CD4-positive, alpha-beta T cell (primary cell): ENCODE measurements at regions of chr19 and their contacts with region 1.

Region 1: DNA sequence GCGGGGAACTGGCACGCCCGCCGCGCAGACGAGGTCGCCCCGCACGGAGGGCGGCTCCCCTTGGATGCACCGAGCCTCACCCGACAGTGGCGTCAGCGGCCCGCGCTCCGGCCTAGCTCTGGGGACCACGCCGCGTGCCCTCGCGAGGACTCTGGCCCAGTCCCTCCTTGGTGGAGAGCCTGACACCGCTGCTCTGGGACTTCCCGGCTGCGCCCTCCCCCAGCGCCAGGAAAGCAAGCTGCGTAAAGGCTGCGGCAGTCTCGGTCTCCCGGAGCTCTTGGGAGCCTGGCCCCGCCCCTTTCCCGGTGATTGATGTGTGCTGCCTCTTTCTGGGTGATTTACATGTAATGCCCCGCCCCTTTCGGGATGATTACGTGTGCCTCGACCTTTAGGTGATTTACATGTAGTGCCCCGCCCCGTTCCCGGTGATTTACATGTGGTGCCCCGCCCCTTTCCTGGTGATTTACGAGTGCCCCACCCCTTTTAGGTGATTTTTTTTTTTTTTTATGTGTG is at the start of gene LENG9:
- DNase-seq: peak; percentile 77 to 99 (median 88)
- ATAC-seq: peak; percentile 71
- H3K4me3 ChIP-seq: peak within 1 kb of the TSS; percentile 82
- H3K4me3 Mint-ChIP-seq: peak within 1 kb of the TSS; percentile 86
- H3K27ac ChIP-seq: peak within 1 kb of the TSS; percentile 69
- H3K27ac Mint-ChIP-seq: peak within 1 kb of the TSS; percentile 84
- H3K4me1 ChIP-seq: peaks cover 49% of the 10 kb centered on the region
- H3K4me1 Mint-ChIP-seq: peaks cover 36% of the 10 kb centered on the region
- H3K27me3 ChIP-seq: no peaks in the 10 kb centered on the region
- H3K27me3 Mint-ChIP-seq: peaks cover 10% of the 10 kb centered on the region
- CTCF ChIP-seq: no peak
- total RNA-seq, gene LENG9: 2.8 to 2.9 TPM

Region 2: GRCh38 chr19:53867225-53868090 is 596.1 kb before region 1 on chr19 and contains the start of gene MYADM:
- CTCF ChIA-PET with region 1: no interaction called
- POLR2A ChIA-PET with region 1: no interaction called
- intact Hi-C with region 1: loop called (anchors 10 kb)
- DNase-seq: peak; percentile 99 to 100 (median 100)
- ATAC-seq: peak; percentile 75
- H3K4me3 ChIP-seq: peak within 1 kb of the TSS; percentile 100
- H3K4me3 Mint-ChIP-seq: peak within 1 kb of the TSS; percentile 99
- H3K27ac ChIP-seq: peak within 1 kb of the TSS; percentile 97 to 100
- H3K27ac Mint-ChIP-seq: peak within 1 kb of the TSS; percentile 99
- H3K4me1 ChIP-seq: peaks cover 59% of the 10 kb centered on the region
- H3K4me1 Mint-ChIP-seq: peaks cover 46% of the 10 kb centered on the region
- H3K27me3 ChIP-seq: no peaks in the 10 kb centered on the region
- H3K27me3 Mint-ChIP-seq: no peaks in the 10 kb centered on the region
- CTCF ChIP-seq: no peak
- total RNA-seq, gene MYADM: 444 to 448 TPM

Region 3: GRCh38 chr19:54209811-54210494 is 253.6 kb before region 1 on chr19:
- CTCF ChIA-PET with region 1: no interaction called
- POLR2A ChIA-PET with region 1: no interaction called
- intact Hi-C with region 1: loop called in 1 of 2 experiments (anchors 10 kb)
- DNase-seq: peak in 4 of 14 experiments; percentile 28 to 69 (median 56)
- ATAC-seq: no peak
- H3K4me3 ChIP-seq: no peak overlapping the region
- H3K4me3 Mint-ChIP-seq: peak overlapping the region; percentile 18
- H3K27ac ChIP-seq: peak overlapping the region; percentile 4 to 23
- H3K27ac Mint-ChIP-seq: peak overlapping the region; percentile 62
- H3K4me1 ChIP-seq: peaks cover 65% of the 10 kb centered on the region
- H3K4me1 Mint-ChIP-seq: peaks cover 56% of the 10 kb centered on the region
- H3K27me3 ChIP-seq: no peaks in the 10 kb centered on the region
- H3K27me3 Mint-ChIP-seq: no peaks in the 10 kb centered on the region
- CTCF ChIP-seq: no peak

Region 4: GRCh38 chr19:54297760-54298305 is 165.8 kb before region 1 on chr19:
- CTCF ChIA-PET with region 1: no interaction called
- POLR2A ChIA-PET with region 1: no interaction called
- intact Hi-C with region 1: no loop called
- DNase-seq: no peak
- ATAC-seq: no peak
- H3K4me3 ChIP-seq: no peak overlapping the region
- H3K4me3 Mint-ChIP-seq: no peak overlapping the region
- H3K27ac ChIP-seq: no peak overlapping the region
- H3K27ac Mint-ChIP-seq: no peak overlapping the region
- H3K4me1 ChIP-seq: no peaks in the 10 kb centered on the region
- H3K4me1 Mint-ChIP-seq: peaks cover 8% of the 10 kb centered on the region
- H3K27me3 ChIP-seq: peaks cover 9 to 14% of the 10 kb centered on the region in 2 experiments
- H3K27me3 Mint-ChIP-seq: peaks cover 16% of the 10 kb centered on the region
- CTCF ChIP-seq: no peak

Region 5: GRCh38 chr19:54448774-54449700 is 14.6 kb before region 1 on chr19 and contains the start of gene LENG8:
- CTCF ChIA-PET with region 1: interaction called, 3 read pairs
- POLR2A ChIA-PET with region 1: interaction called, 72 read pairs
- intact Hi-C with region 1: loop called (anchors 1 kb)
- DNase-seq: peak; percentile 93 to 100 (median 97)
- ATAC-seq: peak; percentile 90
- H3K4me3 ChIP-seq: peak within 1 kb of the TSS; percentile 98
- H3K4me3 Mint-ChIP-seq: peak within 1 kb of the TSS; percentile 92
- H3K27ac ChIP-seq: peak within 1 kb of the TSS; percentile 91 to 98
- H3K27ac Mint-ChIP-seq: peak within 1 kb of the TSS; percentile 98
- H3K4me1 ChIP-seq: peaks cover 48% of the 10 kb centered on the region
- H3K4me1 Mint-ChIP-seq: peaks cover 56% of the 10 kb centered on the region
- H3K27me3 ChIP-seq: no peaks in the 10 kb centered on the region
- H3K27me3 Mint-ChIP-seq: no peaks in the 10 kb centered on the region
- CTCF ChIP-seq: no peak
- total RNA-seq, gene LENG8: 610 to 639 TPM

Region 6: GRCh38 chr19:54481322-54481930 is 17.8 kb after region 1 on chr19:
- CTCF ChIA-PET with region 1: no interaction called
- POLR2A ChIA-PET with region 1: no interaction called
- intact Hi-C with region 1: no loop called
- DNase-seq: peak in 6 of 14 experiments; percentile 22 to 77 (median 44)
- ATAC-seq: peak; percentile 63
- H3K4me3 ChIP-seq: no peak overlapping the region
- H3K4me3 Mint-ChIP-seq: no peak overlapping the region
- H3K27ac ChIP-seq: no peak overlapping the region
- H3K27ac Mint-ChIP-seq: no peak overlapping the region
- H3K4me1 ChIP-seq: peaks cover 5% of the 10 kb centered on the region
- H3K4me1 Mint-ChIP-seq: peaks cover 5% of the 10 kb centered on the region
- H3K27me3 ChIP-seq: peaks cover 3 to 8% of the 10 kb centered on the region in 2 experiments
- H3K27me3 Mint-ChIP-seq: peaks cover 47% of the 10 kb centered on the region
- CTCF ChIP-seq: peak; percentile 79

Region 7: GRCh38 chr19:54594737-54595136 is 131.2 kb after region 1 on chr19:
- CTCF ChIA-PET with region 1: no interaction called
- POLR2A ChIA-PET with region 1: no interaction called
- intact Hi-C with region 1: no loop called
- DNase-seq: no peak
- ATAC-seq: no peak
- H3K4me3 ChIP-seq: no peak overlapping the region
- H3K4me3 Mint-ChIP-seq: no peak overlapping the region
- H3K27ac ChIP-seq: no peak overlapping the region
- H3K27ac Mint-ChIP-seq: no peak overlapping the region
- H3K4me1 ChIP-seq: no peaks in the 10 kb centered on the region
- H3K4me1 Mint-ChIP-seq: no peaks in the 10 kb centered on the region
- H3K27me3 ChIP-seq: peaks cover 8 to 16% of the 10 kb centered on the region in 2 experiments
- H3K27me3 Mint-ChIP-seq: peaks cover 36% of the 10 kb centered on the region
- CTCF ChIP-seq: no peak

Region 8: DNA sequence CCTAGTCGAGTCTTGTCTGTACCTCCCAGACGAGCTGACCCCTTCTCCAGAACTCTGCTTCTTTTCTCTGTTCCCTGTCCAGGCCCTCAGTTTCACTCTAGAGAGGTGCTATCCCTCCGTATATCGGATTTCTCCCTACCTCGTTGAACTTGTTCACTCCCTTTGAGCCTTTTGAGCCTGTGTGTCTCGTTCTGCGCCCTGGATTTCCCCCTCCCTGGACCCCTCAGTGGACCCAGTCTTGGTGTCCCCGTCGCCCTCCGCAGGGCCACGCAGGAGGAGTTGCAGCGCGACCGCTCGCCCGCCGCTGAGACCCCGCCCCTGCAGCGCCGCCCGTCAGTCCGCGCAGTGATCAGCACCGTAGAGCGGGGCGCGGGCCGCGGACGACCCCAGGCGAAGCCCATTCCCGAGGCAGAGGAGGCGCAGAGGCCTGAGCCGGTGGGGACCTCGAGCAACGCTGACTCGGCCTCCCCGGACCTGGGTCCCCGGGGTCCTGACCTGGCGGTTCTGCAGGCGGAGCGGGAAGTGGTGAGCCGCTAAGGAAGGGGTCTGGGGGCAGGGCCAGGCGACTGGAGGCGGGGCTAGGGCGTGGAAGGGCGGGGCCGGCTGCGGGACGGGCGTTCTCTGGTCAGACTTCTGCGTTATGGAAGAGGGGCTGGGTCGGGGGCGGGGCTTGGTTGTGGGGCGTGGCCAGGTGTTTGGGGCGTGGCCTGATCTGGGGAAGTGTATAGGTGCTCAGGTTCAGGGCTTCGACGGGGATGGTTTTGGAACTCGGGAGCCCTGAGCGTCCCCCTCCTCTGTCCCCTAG is 617.6 kb after region 1 on chr19:
- CTCF ChIA-PET with region 1: no interaction called
- POLR2A ChIA-PET with region 1: no interaction called
- intact Hi-C with region 1: loop called in 1 of 2 experiments (anchors 5 kb)
- DNase-seq: peak; percentile 74 to 95 (median 86)
- ATAC-seq: peak; percentile 71
- H3K4me3 ChIP-seq: peak overlapping the region; percentile 57
- H3K4me3 Mint-ChIP-seq: peak overlapping the region; percentile 85
- H3K27ac ChIP-seq: no peak overlapping the region
- H3K27ac Mint-ChIP-seq: peak overlapping the region; percentile 49
- H3K4me1 ChIP-seq: peaks cover 35% of the 10 kb centered on the region
- H3K4me1 Mint-ChIP-seq: peaks cover 25% of the 10 kb centered on the region
- H3K27me3 ChIP-seq: peaks cover 34 to 51% of the 10 kb centered on the region in 2 experiments
- H3K27me3 Mint-ChIP-seq: peaks cover 82% of the 10 kb centered on the region
- CTCF ChIP-seq: no peak

Region 9: DNA sequence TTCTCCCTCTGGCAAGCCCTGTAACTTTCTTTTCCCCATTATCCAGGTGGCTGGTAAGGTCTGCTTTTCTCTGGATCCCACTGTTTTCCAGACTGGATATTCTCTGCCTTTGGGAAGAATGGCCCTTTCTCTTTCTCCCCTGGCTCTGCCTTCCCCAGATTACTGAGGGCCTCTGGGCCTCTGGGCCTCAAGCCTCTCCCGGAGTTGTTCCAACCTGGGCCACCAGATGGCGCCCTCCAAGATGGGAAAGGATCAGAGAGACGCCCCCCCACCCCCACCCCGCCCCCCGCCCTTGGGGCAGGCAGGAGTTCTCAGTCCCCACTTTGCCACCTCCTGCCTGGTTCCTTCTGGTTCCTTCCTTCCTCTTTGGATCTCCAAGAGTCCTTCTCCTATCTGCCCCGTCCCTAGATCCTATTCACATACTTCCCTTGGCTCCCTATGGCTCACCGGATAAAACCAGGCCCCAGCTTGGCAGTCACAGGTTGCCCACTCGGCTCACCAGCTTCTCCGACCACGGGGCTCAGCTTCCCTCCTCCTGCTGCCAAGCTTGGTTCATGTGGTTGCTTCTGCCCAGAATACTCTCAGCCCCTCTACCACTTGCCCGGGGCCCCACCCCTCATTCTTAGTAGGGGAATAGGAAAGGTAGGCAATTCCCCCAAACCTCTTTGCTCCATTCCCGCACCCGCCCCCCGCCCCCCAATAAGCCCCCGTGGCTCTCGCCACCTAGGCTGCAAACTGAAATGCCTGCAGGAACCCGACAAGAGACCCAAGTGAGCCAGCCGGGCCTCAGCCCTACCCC is 625.2 kb after region 1 on chr19:
- CTCF ChIA-PET with region 1: no interaction called
- POLR2A ChIA-PET with region 1: no interaction called
- intact Hi-C with region 1: loop called (anchors 5 kb)
- DNase-seq: peak; percentile 62 to 83 (median 73)
- ATAC-seq: peak; percentile 61
- H3K4me3 ChIP-seq: no peak overlapping the region
- H3K4me3 Mint-ChIP-seq: peak overlapping the region; percentile 49
- H3K27ac ChIP-seq: no peak overlapping the region
- H3K27ac Mint-ChIP-seq: no peak overlapping the region
- H3K4me1 ChIP-seq: peaks cover 23% of the 10 kb centered on the region
- H3K4me1 Mint-ChIP-seq: peaks cover 30% of the 10 kb centered on the region
- H3K27me3 ChIP-seq: peaks cover 32 to 42% of the 10 kb centered on the region in 2 experiments
- H3K27me3 Mint-ChIP-seq: peaks cover 54% of the 10 kb centered on the region
- CTCF ChIP-seq: peak; percentile 93

Region 10: DNA sequence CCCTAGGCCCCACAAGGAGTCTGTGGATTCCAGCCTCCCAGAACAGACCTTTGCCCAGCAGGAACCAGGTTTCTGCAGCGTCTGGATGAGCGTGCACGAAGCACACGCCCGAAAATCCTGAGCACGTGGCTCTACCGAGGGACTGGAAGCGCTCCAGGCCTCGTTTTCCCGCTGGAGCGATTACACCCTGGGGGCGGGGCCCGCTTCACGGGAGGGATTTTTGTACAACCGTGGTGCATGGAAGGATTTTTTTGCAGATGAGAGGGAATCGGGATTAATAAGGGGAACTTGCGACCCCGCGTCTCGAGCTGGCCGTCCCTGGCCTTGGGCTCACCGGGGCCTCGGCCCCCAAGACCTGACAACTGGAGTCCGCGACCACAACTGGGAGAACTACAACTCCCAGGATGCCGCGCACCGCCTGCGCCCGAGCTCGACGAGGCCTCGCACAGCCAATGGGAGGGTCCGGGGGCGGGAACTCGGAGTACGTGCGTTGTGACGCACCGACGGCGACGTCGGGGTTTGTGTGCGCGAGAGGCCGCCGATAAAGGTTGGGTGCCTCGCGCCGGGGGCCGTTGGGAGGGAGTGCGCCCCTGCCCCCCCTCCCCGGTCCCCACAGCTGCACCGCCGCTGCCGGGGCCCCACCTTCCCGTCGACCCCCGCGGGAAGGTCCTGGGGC is 1012.7 kb after region 1 on chr19 and contains the start of gene ZNF628:
- CTCF ChIA-PET with region 1: no interaction called
- POLR2A ChIA-PET with region 1: no interaction called
- intact Hi-C with region 1: loop called in 1 of 2 experiments (anchors 5 kb)
- DNase-seq: peak; percentile 94 to 99 (median 98)
- ATAC-seq: peak; percentile 93
- H3K4me3 ChIP-seq: peak within 1 kb of the TSS; percentile 76
- H3K4me3 Mint-ChIP-seq: peak within 1 kb of the TSS; percentile 91
- H3K27ac ChIP-seq: peak within 1 kb of the TSS; percentile 72 to 77
- H3K27ac Mint-ChIP-seq: peak within 1 kb of the TSS; percentile 93
- H3K4me1 ChIP-seq: peaks cover 26% of the 10 kb centered on the region
- H3K4me1 Mint-ChIP-seq: peaks cover 38% of the 10 kb centered on the region
- H3K27me3 ChIP-seq: no peaks in the 10 kb centered on the region
- H3K27me3 Mint-ChIP-seq: no peaks in the 10 kb centered on the region
- CTCF ChIP-seq: no peak
- total RNA-seq, gene ZNF628: 26.6 to 27.2 TPM